MCF 10A (cell line): ENCODE measurements at regions of chr13 and their contacts with region 1.

Region 1: GRCh38 chr13:29472332-29472961 is 123.0 kb downstream of the SLC7A1 start:
- DNase-seq: peak; percentile 72
- H3K4me3 Mint-ChIP-seq: no peak overlapping the region
- H3K27ac Mint-ChIP-seq: no peak overlapping the region
- H3K4me1 Mint-ChIP-seq: no peaks in the 10 kb centered on the region
- H3K27me3 Mint-ChIP-seq: no peaks in the 10 kb centered on the region
- CTCF ChIP-seq: peak; percentile 94

Region 2: GRCh38 chr13:29369060-29369743 is 103.2 kb before region 1 on chr13:
- CTCF ChIA-PET with region 1: interaction called, 5 read pairs
- POLR2A ChIA-PET with region 1: no interaction called
- intact Hi-C with region 1: loop called (anchors 5 kb)
- DNase-seq: peak; percentile 62
- H3K4me3 Mint-ChIP-seq: no peak overlapping the region
- H3K27ac Mint-ChIP-seq: no peak overlapping the region
- H3K4me1 Mint-ChIP-seq: no peaks in the 10 kb centered on the region
- H3K27me3 Mint-ChIP-seq: peaks cover 12% of the 10 kb centered on the region
- CTCF ChIP-seq: peak; percentile 28

Region 3: DNA sequence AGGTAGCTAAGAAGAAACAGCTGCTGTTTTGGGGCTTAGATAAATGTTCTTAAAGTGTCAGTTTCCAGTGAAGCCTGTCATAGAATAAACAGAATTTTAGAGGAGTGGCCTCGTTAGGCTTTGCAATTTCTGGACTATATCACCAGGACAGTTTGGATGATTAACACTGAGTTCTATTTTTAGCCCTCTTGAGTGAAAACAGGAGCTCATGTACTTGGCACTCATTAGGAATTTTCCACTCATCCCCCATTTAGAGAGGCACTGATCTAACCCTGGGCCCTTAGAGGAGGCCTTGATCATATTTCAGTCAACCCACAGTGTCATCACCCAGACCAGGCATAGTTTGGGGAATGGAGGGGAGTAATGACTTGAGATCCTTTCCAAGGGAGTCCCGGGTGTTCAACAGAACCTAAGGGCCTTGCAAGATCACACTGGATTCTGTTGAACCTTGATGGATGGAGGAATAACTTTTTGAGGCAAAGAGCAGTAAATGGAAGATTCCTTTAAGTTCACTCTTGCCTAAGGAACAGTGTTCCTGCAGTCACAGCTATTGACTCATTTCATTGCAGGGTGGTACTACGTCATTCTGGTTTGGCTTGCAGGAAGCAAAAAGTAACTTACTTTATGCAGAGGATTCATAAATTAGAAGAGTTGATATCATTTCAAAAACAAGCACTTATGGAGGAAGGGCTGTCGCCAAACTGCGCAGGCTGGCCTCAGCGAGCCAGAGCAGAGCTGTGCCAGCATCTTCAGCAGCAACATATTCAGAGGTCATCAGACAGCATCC is 37.1 kb before region 1 on chr13:
- CTCF ChIA-PET with region 1: interaction called, 7 read pairs
- POLR2A ChIA-PET with region 1: interaction called, 5 read pairs
- intact Hi-C with region 1: loop called (anchors 5 kb)
- DNase-seq: peak; percentile 74
- H3K4me3 Mint-ChIP-seq: peak overlapping the region; percentile 22
- H3K27ac Mint-ChIP-seq: peak overlapping the region; percentile 77
- H3K4me1 Mint-ChIP-seq: peaks cover 25% of the 10 kb centered on the region
- H3K27me3 Mint-ChIP-seq: no peaks in the 10 kb centered on the region
- CTCF ChIP-seq: no peak

Region 4: DNA sequence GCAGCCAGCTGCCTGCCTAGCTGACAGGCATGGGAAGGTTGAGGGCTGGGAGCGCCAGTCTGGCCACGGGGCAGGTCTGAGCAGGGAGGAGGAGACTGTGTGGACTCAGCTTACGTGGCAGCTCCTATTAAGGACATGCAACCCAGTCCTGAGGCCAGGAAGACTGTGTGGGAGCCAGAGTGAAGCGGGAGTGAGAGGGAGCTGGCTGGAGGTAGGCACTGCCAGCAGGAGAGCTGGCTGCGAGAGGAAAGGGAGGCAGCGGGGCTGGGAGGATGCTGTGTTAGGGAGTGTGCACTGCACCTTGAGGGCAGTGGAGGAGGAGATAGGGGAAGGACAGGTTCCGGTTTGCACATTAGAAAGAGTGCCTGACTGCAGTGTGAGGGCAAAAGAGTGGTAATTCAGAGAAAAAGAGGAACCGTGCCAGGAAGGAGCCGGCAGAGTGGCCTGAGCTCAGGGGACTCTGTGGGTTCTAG is 23.8 kb after region 1 on chr13:
- CTCF ChIA-PET with region 1: interaction called, 10 read pairs
- POLR2A ChIA-PET with region 1: no interaction called
- intact Hi-C with region 1: no loop called
- DNase-seq: peak; percentile 75
- H3K4me3 Mint-ChIP-seq: peak overlapping the region; percentile 20
- H3K27ac Mint-ChIP-seq: no peak overlapping the region
- H3K4me1 Mint-ChIP-seq: peaks cover 9% of the 10 kb centered on the region
- H3K27me3 Mint-ChIP-seq: peaks cover 15% of the 10 kb centered on the region
- CTCF ChIP-seq: no peak

Region 5: DNA sequence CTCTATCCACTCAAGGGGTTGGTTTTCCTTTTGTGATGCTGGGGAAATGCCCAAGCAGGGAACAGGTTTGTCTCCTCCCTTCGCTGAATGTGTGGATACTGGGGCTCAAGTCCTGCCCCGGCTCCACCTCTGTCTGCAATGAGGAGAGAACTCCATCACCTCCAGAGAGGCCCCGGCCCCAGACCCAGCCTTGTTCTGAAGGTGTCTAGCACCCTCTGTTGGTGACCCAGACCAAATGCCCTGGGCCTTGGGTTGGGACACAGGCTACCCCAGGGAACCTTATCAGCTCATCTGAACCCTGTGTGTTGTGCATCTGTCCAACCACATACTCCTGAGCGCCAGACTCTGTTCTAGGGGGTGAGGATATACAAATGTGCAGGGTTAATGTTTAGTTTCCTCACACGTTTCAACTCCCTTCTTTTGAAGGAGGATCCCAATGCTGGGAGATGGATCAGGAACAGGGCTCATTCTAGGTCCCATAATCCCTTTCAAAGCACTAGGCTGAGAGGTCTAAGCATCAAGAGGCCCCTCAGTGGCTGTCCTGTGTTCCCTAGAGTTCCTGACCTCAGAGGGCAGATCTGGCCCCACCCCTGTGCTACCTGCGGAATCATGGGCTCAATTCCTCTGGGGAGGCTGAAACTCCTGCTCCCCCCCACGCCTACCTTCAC is 235.6 kb after region 1 on chr13:
- CTCF ChIA-PET with region 1: interaction called, 11 read pairs
- POLR2A ChIA-PET with region 1: no interaction called
- intact Hi-C with region 1: loop called (anchors 1 kb)
- DNase-seq: peak; percentile 62
- H3K4me3 Mint-ChIP-seq: no peak overlapping the region
- H3K27ac Mint-ChIP-seq: no peak overlapping the region
- H3K4me1 Mint-ChIP-seq: peaks cover 6% of the 10 kb centered on the region
- H3K27me3 Mint-ChIP-seq: peaks cover 41% of the 10 kb centered on the region
- CTCF ChIP-seq: peak; percentile 78